Endothelial cell of umbilical vein (primary cell): ENCODE measurements at regions of chr14 and their contacts with region 1.

Region 1: GRCh38 chr14:23068476-23069412 is 11.4 kb upstream of the CDH24 start:
- DNase-seq: peak; percentile 97
- H3K4me3 ChIP-seq: no peak overlapping the region
- H3K27ac ChIP-seq: peak overlapping the region; percentile 35
- H3K4me1 ChIP-seq: peaks cover 28% of the 10 kb centered on the region
- H3K27me3 ChIP-seq: no peaks in the 10 kb centered on the region
- CTCF ChIP-seq: peak; percentile 93 to 100
- POLR2A ChIP-seq: no peak

Region 2: DNA sequence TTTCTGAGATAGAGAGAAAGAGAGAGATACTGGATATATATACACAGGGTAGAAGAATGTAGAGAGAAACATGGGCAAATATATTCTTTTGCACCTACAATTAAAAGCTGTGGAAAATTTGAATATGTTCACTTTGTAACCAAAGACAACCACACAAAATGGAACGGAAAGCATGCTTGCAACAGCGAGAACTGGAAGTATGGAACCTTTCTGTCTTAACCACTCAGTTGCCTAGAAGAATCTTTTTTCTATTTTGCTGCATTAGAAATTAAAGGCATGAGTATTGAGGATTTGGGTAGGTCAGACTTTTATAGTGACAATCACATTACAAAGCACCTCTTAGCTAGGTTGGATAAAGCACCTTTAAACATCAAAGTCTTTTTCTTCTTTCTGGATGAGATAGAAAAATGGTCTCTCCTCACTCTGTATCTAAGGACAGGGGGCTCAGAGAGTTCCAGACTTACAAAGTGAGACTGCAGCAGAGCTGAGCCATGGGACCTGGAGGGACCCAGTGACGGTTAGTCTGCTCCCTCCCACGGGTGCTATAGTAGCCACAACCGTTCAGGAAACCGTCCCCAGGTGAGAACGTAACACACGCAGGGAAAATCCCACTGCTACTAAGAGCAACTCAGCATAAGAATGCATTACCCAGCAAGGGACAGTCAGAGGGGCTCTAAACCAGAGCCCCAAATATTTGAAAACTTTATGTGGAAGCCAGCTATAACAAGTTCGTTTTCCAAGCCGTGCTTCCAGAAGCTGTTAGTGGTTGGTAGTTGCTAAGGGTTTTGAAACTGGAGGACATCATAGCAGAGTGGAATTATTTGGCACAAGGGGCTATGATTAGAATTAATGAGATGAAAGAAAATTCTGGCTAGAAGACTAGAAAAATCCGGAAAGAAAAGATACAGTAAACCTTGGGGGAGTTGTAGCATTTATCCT is 576.8 kb before region 1 on chr14:
- CTCF ChIA-PET with region 1: no interaction called
- POLR2A ChIA-PET with region 1: no interaction called
- dilution Hi-C with region 1: no loop called
- intact Hi-C with region 1: no loop called
- DNase-seq: no peak
- H3K4me3 ChIP-seq: no peak overlapping the region
- H3K27ac ChIP-seq: no peak overlapping the region
- H3K4me1 ChIP-seq: no peaks in the 10 kb centered on the region
- H3K27me3 ChIP-seq: peaks cover 35 to 66% of the 10 kb centered on the region in 2 experiments
- CTCF ChIP-seq: no peak
- POLR2A ChIP-seq: no peak

Region 3: GRCh38 chr14:22920697-22921096 is 148.0 kb before region 1 on chr14:
- CTCF ChIA-PET with region 1: no interaction called
- POLR2A ChIA-PET with region 1: no interaction called
- dilution Hi-C with region 1: no loop called
- intact Hi-C with region 1: no loop called
- DNase-seq: no peak
- H3K4me3 ChIP-seq: no peak overlapping the region
- H3K27ac ChIP-seq: no peak overlapping the region
- H3K4me1 ChIP-seq: peaks cover 12% of the 10 kb centered on the region
- H3K27me3 ChIP-seq: no peaks in the 10 kb centered on the region
- CTCF ChIP-seq: no peak
- POLR2A ChIP-seq: no peak

Region 4: GRCh38 chr14:23047034-23047634 is 21.6 kb before region 1 on chr14:
- CTCF ChIA-PET with region 1: interaction called, 10 read pairs
- POLR2A ChIA-PET with region 1: no interaction called
- dilution Hi-C with region 1: no loop called
- intact Hi-C with region 1: no loop called
- DNase-seq: peak; percentile 81
- H3K4me3 ChIP-seq: no peak overlapping the region
- H3K27ac ChIP-seq: peak overlapping the region; percentile 37
- H3K4me1 ChIP-seq: peaks cover 41% of the 10 kb centered on the region
- H3K27me3 ChIP-seq: no peaks in the 10 kb centered on the region
- CTCF ChIP-seq: no peak
- POLR2A ChIP-seq: no peak

Region 5: DNA sequence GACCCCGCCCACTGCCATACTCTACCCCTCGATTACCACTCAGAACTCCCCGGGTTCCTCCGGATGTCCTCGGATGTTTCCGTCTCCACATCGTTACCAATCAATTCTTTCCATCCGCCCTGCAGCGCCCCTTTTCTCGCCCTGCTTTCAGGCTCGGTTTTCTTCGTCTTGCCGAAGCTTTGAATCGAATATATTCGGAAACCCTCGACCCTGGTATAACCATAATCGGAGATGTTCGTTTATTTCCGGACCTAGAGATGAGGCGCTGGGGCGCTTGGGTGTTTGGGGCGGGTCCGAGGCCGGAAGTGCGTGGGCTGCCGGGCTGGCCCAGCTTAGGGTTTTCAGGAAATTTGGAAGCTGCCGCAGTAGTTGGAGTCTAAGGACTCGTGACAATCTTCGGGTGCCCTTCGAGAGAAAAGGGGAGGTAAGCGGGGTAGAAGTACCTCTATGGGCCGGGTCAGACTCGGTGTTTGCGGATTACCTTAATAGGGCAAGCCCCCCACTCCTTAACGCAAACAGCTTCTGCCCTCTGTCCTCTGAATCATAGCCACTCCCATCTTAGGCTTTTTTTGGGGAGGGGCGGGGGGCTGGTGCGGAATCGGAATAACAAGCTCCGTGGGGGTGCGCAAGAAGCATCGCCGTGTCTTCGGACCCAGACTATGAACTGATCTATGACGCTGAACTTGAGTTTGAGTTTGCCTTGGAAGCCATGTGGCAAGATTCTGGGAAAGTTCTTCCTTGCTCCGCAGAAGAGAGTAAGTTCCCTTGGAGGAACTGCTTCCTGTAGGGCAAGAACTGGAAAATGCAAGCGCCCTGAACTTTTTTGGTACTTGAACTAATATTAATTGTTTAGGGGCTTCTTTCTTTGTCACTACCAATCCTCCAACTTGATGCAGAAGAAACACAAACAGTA is 26.7 kb after region 1 on chr14 and contains the start of gene C14orf119:
- CTCF ChIA-PET with region 1: interaction called, 83 read pairs
- POLR2A ChIA-PET with region 1: interaction called, 12 read pairs
- dilution Hi-C with region 1: no loop called
- intact Hi-C with region 1: loop called (anchors 1 kb)
- DNase-seq: peak; percentile 100
- H3K4me3 ChIP-seq: peak within 1 kb of the TSS; percentile 87 to 99 (median 94)
- H3K27ac ChIP-seq: peak within 1 kb of the TSS; percentile 89
- H3K4me1 ChIP-seq: peaks cover 28% of the 10 kb centered on the region
- H3K27me3 ChIP-seq: no peaks in the 10 kb centered on the region
- CTCF ChIP-seq: no peak
- POLR2A ChIP-seq: peak; percentile 66
- total RNA-seq, gene C14orf119: 55.5 and 58.3 TPM in 2 replicates

Region 6: GRCh38 chr14:23113431-23114119 is 44.8 kb after region 1 on chr14:
- CTCF ChIA-PET with region 1: interaction called, 141 read pairs
- POLR2A ChIA-PET with region 1: interaction called, 3 read pairs
- dilution Hi-C with region 1: no loop called
- intact Hi-C with region 1: loop called (anchors 1 kb)
- DNase-seq: no peak
- H3K4me3 ChIP-seq: no peak overlapping the region
- H3K27ac ChIP-seq: no peak overlapping the region
- H3K4me1 ChIP-seq: peaks cover 13% of the 10 kb centered on the region
- H3K27me3 ChIP-seq: peaks cover 9 to 10% of the 10 kb centered on the region in 2 experiments
- CTCF ChIP-seq: no peak
- POLR2A ChIP-seq: no peak

Region 7: GRCh38 chr14:23228812-23229211 is 160.1 kb after region 1 on chr14:
- CTCF ChIA-PET with region 1: no interaction called
- POLR2A ChIA-PET with region 1: no interaction called
- dilution Hi-C with region 1: no loop called
- intact Hi-C with region 1: no loop called
- DNase-seq: no peak
- H3K4me3 ChIP-seq: no peak overlapping the region
- H3K27ac ChIP-seq: no peak overlapping the region
- H3K4me1 ChIP-seq: no peaks in the 10 kb centered on the region
- H3K27me3 ChIP-seq: peaks cover 0 to 3% of the 10 kb centered on the region in 2 experiments
- CTCF ChIP-seq: no peak
- POLR2A ChIP-seq: no peak